Dorsolateral prefrontal cortex (tissue), 120 donors: ENCODE measurements at regions of chr5 and their contacts with region 1.

Region 1: GRCh38 chr5:88486431-88486830 is 217.8 kb upstream of the TMEM161B start:
- DNase-seq: no peak
- H3K4me3 ChIP-seq: no peak overlapping the region
- H3K27ac ChIP-seq: peak overlapping the region in 31 of 59 donors; percentile 0 to 79 (median 32)
- H3K27me3 ChIP-seq: no peaks in the 10 kb centered on the region
- CTCF ChIP-seq: no peak

Region 2: DNA sequence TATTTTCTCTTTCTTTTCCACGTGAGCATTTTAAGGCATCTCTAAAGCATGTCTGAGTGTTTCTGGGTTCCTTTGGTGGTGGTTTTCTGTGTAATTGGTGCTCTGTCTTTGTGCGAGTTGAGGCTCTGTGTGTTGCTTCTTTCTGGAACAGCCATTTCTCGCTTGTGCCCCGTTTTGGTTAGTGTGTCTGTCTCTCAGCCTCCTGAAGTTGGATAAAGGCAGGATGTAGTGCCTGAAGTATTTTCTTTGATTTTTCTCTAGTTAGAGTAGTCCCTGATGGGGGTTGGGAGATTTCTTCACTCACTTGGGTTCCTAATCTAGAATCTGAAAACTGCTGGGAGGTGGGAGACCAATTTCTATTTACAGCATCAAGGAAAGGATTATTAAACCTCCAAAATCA is 88.1 kb before region 1 on chr5:
- intact Hi-C with region 1: loop called in 1 of 2 experiments (anchors 5 kb)
- DNase-seq: no peak
- H3K4me3 ChIP-seq: peak overlapping the region; percentile 5 to 70 (median 48)
- H3K27ac ChIP-seq: peak overlapping the region; percentile 31 to 99 (median 95)
- H3K27me3 ChIP-seq: no peaks in the 10 kb centered on the region
- CTCF ChIP-seq: no peak

Region 3: DNA sequence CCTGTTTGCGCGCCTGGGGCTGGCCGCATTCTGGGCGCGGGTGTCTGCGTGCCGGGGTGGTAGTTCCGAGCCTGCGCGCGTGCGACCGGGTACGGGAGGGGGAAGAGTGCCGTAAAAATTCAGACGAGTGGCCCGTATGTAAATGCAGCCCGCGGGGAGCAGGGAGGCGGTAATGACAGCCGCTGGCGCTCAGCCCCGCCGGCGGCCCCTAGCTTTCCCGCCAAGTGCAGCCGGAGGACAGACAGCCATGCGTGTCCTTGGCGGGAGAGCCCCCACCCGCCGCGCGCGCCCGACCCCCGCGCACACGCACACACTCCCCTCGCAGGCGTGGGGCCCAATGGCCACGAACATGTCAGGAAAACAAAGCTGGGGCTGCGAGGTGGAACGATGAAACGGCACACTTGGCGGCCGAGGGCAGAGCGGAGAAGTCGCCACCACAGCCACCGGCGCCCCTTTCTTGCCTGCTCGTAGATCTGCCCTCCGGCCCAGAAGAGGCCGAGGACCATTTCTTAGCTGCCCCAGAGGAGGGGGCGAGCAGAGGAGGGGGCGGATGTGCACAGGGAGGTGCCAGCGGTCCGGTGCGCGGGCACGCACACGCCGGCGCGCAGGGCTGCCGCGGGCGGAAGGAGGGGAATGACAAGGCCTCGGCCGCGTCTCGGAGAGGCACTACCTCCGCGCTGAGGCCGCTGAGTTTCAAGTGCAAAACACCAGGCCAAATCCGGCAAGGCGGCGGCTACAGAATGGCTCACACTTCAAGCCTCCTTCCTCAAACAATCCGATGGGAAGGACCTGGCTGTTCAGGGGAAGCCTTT is 188.1 kb after region 1 on chr5:
- intact Hi-C with region 1: loop called (anchors 5 kb)
- DNase-seq: peak; percentile 78 to 90 (median 86)
- H3K4me3 ChIP-seq: peak overlapping the region; percentile 55 to 93 (median 79)
- H3K27ac ChIP-seq: peak overlapping the region; percentile 91 to 100 (median 99)
- H3K27me3 ChIP-seq: peaks cover 0 to 32% (median 0%) of the 10 kb centered on the region in 45 donors
- CTCF ChIP-seq: peak in 15 of 56 donors; percentile 3 to 38 (median 10)